Dorsolateral prefrontal cortex (tissue), 120 donors: ENCODE measurements at regions of chr18 and their contacts with region 1.

Region 1: GRCh38 chr18:56638271-56639093 is at the start of gene TXNL1:
- DNase-seq: peak; percentile 97 to 99 (median 98)
- H3K4me3 ChIP-seq: peak within 1 kb of the TSS; percentile 59 to 100 (median 92)
- H3K27ac ChIP-seq: peak within 1 kb of the TSS; percentile 65 to 99 (median 96)
- H3K27me3 ChIP-seq: no peaks in the 10 kb centered on the region
- CTCF ChIP-seq: peak in 22 of 56 donors; percentile 6 to 51 (median 29)
- total RNA-seq, gene TXNL1: 48.1 to 113 (median 87.5) TPM

Region 2: DNA sequence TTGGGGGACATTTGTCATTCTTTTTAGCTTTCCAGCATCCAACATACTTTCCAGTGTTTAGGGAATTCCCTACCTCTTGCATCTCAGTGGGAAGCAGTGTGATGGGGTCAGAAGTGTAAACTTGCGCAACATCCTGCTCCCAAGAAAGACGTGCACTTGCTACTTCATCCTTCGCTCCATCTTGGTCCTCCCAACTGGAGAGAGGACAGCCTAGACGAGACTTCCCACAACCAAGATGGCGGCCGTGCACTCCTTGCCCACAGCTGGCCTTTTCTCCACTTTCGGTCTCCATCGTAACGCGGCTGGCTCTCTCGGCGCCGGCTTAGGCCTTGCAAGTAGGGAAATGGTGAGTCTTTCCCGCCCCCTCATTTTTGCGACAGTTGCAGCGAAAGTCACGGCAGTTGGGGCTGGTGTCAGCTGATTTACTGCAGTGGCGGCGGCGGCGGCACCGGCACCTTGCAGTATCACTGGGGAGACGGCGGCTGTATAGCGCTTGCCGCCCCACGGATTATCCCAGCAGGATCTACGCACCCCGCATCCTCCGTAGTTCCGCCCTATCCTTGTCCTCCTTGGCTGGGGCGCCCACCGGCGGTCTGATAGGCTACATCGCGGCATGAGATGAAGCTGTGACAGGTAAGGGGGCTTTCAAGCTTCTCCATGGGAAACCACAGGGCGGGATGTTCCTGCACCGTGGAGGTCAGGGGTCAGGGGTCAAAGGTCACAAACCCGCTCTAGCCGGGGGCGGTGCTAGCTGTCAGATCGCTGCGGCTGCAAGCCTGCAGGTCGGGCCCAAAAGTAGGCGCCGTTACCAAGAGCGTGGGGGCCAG is 12.7 kb after region 1 on chr18 and contains the start of gene WDR7:
- intact Hi-C with region 1: loop called in 1 of 2 experiments (anchors 1 kb)
- DNase-seq: peak; percentile 93 to 99 (median 96)
- H3K4me3 ChIP-seq: peak within 1 kb of the TSS; percentile 63 to 99 (median 89)
- H3K27ac ChIP-seq: peak within 1 kb of the TSS; percentile 55 to 98 (median 90)
- H3K27me3 ChIP-seq: no peaks in the 10 kb centered on the region
- CTCF ChIP-seq: peak in 36 of 56 donors; percentile 3 to 59 (median 35)
- total RNA-seq, gene WDR7: 101 to 199 (median 153) TPM